HCT116 (cell line): ENCODE measurements at regions of chr5 and their contacts with region 1.

Region 1: DNA sequence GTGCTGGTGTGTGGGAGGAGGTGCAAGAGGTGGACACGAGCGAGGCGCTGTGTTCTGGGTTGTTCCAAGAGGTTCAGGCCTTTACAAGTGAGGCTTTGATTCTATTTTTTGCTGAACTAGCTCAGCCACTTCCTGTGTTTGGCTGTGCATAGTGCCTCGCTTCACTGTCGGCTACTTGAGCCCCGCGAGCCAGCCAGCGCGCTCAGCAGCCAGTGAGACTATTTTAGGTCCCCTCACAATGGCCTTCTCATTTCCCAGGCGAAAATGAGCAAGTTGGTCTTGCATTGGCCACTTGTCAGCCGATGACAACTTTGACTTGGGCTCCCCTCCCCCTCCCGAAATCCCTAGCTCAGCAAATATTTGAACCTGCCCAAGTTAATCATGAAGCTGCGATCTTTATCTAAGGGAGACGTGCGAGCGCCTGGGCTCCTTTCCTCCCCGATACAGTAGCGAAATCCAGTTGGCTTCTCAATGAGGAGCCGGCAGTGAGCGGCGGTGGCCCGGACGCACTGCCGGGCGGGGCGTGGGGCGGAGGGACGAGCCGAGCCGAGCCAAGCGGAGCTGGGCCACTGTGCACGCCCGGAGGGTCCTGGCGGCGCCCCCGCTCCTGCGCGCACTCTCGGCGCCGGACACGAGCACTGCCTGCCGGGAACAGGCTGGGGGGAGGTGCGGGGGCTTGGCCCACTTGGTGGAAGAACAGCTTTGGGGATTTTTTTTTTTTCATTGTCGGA is 72.6 kb downstream of the PIK3R1 start:
- DNase-seq: no peak
- ATAC-seq: no peak
- H3K4me3 ChIP-seq: no peak overlapping the region
- H3K27ac ChIP-seq: no peak overlapping the region
- H3K4me1 ChIP-seq: 0 out of 4 replicates have a peak, but pooled peaks cover 0 to 5% of the 10 kb centered on the region in 2 experiments
- H3K27me3 ChIP-seq: no peaks in the 10 kb centered on the region
- CTCF ChIP-seq: no peak
- POLR2A ChIP-seq: no peak
- RAD21 ChIP-seq: no peak

Region 2: GRCh38 chr5:68007451-68007850 is 280.7 kb before region 1 on chr5:
- CTCF ChIA-PET with region 1: no interaction called
- POLR2A ChIA-PET with region 1: no interaction called
- RAD21 ChIA-PET with region 1: no interaction called
- intact Hi-C with region 1: no loop called
- DNase-seq: no peak
- ATAC-seq: no peak
- H3K4me3 ChIP-seq: no peak overlapping the region
- H3K27ac ChIP-seq: no peak overlapping the region
- H3K4me1 ChIP-seq: peaks cover 0 to 2% of the 10 kb centered on the region in 2 experiments; a peak in 1 of 4 replicates
- H3K27me3 ChIP-seq: no peaks in the 10 kb centered on the region
- CTCF ChIP-seq: no peak
- POLR2A ChIP-seq: no peak
- RAD21 ChIP-seq: no peak

Region 3: DNA sequence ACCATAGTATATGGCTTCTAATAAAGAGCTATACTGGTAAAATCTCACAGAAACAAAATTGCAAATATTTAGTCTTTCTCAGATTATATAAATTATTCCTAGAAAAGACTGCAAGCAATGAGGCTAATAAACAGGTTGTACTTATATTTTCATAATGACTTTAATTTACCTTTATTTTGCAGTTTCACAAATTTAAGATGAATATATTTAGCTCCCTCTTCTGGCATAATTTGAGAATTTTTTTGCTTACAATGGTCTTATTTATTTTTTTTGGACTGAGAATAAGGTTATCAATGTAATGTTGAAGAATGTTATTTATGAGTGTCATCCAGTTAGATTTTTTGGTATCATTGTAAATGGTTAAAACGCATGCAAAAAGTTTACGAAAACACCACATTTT is 15.9 kb before region 1 on chr5:
- CTCF ChIA-PET with region 1: interaction called, 23 read pairs
- POLR2A ChIA-PET with region 1: no interaction called
- RAD21 ChIA-PET with region 1: no interaction called
- intact Hi-C with region 1: no loop called
- DNase-seq: no peak
- ATAC-seq: no peak
- H3K4me3 ChIP-seq: no peak overlapping the region
- H3K27ac ChIP-seq: no peak overlapping the region
- H3K4me1 ChIP-seq: peaks cover 0 to 4% of the 10 kb centered on the region in 2 experiments; a peak in 2 of 4 replicates
- H3K27me3 ChIP-seq: no peaks in the 10 kb centered on the region
- CTCF ChIP-seq: peak; percentile 1 to 58 (median 11); a peak in 2 of 6 replicates
- POLR2A ChIP-seq: no peak
- RAD21 ChIP-seq: peak; percentile 53

Region 4: DNA sequence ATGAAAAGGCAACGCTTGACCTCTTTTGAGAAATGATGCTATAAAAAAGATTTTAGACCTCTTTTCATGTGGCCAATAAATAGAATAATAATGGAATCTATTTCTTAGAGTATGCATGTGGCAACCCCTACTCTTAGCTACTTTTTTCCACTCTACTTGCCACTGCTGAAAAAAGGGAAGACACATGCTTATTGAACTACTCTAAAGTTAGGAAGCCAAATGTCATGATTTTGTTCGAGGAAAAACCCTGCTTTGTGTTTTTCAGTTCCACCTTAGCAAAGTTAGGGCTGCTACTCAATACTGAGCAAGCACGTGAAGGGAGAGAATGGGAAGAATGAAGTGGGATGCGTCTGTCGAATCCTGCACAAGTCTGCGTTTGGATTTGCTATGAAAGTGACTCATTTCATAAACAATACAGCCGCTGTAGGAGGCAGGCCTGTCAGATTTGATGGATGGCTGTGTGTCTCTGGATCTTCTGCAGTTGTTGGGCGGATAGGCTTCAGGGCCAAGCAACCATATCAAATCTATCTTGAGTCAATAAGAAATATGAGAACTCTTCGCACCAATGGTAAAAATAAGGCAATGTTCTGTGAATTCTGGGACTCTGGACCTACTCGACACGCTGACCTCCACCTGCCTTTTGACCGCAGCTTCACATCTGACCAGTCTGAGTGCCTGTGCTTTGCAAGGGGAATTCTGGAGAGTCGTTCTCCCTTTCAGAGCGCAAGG is 261.0 kb after region 1 on chr5:
- CTCF ChIA-PET with region 1: no interaction called
- POLR2A ChIA-PET with region 1: no interaction called
- RAD21 ChIA-PET with region 1: no interaction called
- intact Hi-C with region 1: loop called (anchors 10 kb)
- DNase-seq: no peak
- ATAC-seq: peak; percentile 73
- H3K4me3 ChIP-seq: no peak overlapping the region
- H3K27ac ChIP-seq: no peak overlapping the region
- H3K4me1 ChIP-seq: peaks cover 2 to 18% of the 10 kb centered on the region in 2 experiments; a peak in 2 of 4 replicates
- H3K27me3 ChIP-seq: no peaks in the 10 kb centered on the region
- CTCF ChIP-seq: no peak
- POLR2A ChIP-seq: no peak
- RAD21 ChIP-seq: no peak

Region 5: GRCh38 chr5:68745448-68745847 is 457.3 kb after region 1 on chr5:
- CTCF ChIA-PET with region 1: interaction called, 3 read pairs
- POLR2A ChIA-PET with region 1: no interaction called
- RAD21 ChIA-PET with region 1: no interaction called
- intact Hi-C with region 1: loop called (anchors 5 kb)
- DNase-seq: no peak
- ATAC-seq: no peak
- H3K4me3 ChIP-seq: no peak overlapping the region
- H3K27ac ChIP-seq: no peak overlapping the region
- H3K4me1 ChIP-seq: no peaks in the 10 kb centered on the region
- H3K27me3 ChIP-seq: no peaks in the 10 kb centered on the region
- CTCF ChIP-seq: peak; percentile 33 to 53 (median 53); a peak in 5 of 6 replicates
- POLR2A ChIP-seq: no peak
- RAD21 ChIP-seq: peak; percentile 70

Region 6: GRCh38 chr5:69007726-69008368 is 719.7 kb after region 1 on chr5:
- CTCF ChIA-PET with region 1: interaction called, 6 read pairs
- POLR2A ChIA-PET with region 1: no interaction called
- RAD21 ChIA-PET with region 1: no interaction called
- intact Hi-C with region 1: loop called (anchors 1 kb)
- DNase-seq: peak; percentile 69
- ATAC-seq: peak; percentile 99
- H3K4me3 ChIP-seq: no peak overlapping the region
- H3K27ac ChIP-seq: no peak overlapping the region
- H3K4me1 ChIP-seq: no peaks in the 10 kb centered on the region
- H3K27me3 ChIP-seq: no peaks in the 10 kb centered on the region
- CTCF ChIP-seq: peak; percentile 57 to 99 (median 96)
- POLR2A ChIP-seq: no peak
- RAD21 ChIP-seq: peak; percentile 79

Region 7: GRCh38 chr5:69285448-69286116 is 997.4 kb after region 1 on chr5:
- CTCF ChIA-PET with region 1: no interaction called
- POLR2A ChIA-PET with region 1: no interaction called
- RAD21 ChIA-PET with region 1: no interaction called
- intact Hi-C with region 1: no loop called
- DNase-seq: no peak
- ATAC-seq: no peak
- H3K4me3 ChIP-seq: no peak overlapping the region
- H3K27ac ChIP-seq: no peak overlapping the region
- H3K4me1 ChIP-seq: no peaks in the 10 kb centered on the region
- H3K27me3 ChIP-seq: no peaks in the 10 kb centered on the region
- CTCF ChIP-seq: no peak
- POLR2A ChIP-seq: no peak
- RAD21 ChIP-seq: no peak